Activated naive CD4-positive, alpha-beta T cell treated with anti-CD3 and anti-CD28 coated beads, Interleukin-2, amount 10 ng/mL, durations not matched to agents 7 days and 5 days (primary cell): ENCODE measurements at regions of chr1 and their contacts with region 1.

Region 1: GRCh38 chr1:119987112-119987511 is 82.3 kb downstream of the NOTCH2 start:
- DNase-seq: no peak
- H3K4me3 Mint-ChIP-seq: no peak overlapping the region
- H3K27ac Mint-ChIP-seq: peak overlapping the region; percentile 21
- H3K4me1 Mint-ChIP-seq: peaks cover 44% of the 10 kb centered on the region
- H3K27me3 Mint-ChIP-seq: no peaks in the 10 kb centered on the region

Region 2: DNA sequence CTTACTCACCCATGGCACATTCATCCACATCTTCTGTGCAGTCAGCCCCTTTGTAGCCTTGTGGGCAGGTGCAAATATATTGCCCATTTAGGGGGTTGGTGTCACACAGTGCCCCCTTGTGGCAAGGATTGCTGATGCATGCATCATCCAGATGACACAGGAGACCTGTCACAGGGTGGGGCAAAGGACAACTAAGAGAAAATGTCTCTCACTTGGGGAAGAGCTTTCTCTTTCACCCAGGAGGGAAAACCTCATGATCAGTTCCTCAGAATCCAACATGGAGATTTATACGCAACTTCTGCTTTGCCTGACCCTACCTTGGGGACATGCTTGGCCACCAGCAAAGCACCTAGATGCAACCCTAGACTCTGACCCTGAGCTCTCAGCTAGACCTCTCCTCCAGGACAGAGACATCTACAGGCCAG is 19.0 kb before region 1 on chr1:
- CTCF ChIA-PET with region 1: interaction called, 14 read pairs
- DNase-seq: peak; percentile 88
- H3K4me3 Mint-ChIP-seq: no peak overlapping the region
- H3K27ac Mint-ChIP-seq: peak overlapping the region; percentile 64
- H3K4me1 Mint-ChIP-seq: peaks cover 14% of the 10 kb centered on the region
- H3K27me3 Mint-ChIP-seq: no peaks in the 10 kb centered on the region